ENCODE measurements at regions of chr16 and their contacts with region 1.

Region 1: GRCh38 chr16:71499775-71500364 is 10.7 kb upstream of the ZNF19 start:
- DNase-seq: no peak
- ATAC-seq: peak; percentile 82
- H3K4me3 ChIP-seq: no peak overlapping the region
- H3K27ac ChIP-seq: no peak overlapping the region
- H3K4me1 ChIP-seq: no peaks in the 10 kb centered on the region
- H3K27me3 ChIP-seq: no peaks in the 10 kb centered on the region
- CTCF ChIP-seq: peak; percentile 67

Region 2: DNA sequence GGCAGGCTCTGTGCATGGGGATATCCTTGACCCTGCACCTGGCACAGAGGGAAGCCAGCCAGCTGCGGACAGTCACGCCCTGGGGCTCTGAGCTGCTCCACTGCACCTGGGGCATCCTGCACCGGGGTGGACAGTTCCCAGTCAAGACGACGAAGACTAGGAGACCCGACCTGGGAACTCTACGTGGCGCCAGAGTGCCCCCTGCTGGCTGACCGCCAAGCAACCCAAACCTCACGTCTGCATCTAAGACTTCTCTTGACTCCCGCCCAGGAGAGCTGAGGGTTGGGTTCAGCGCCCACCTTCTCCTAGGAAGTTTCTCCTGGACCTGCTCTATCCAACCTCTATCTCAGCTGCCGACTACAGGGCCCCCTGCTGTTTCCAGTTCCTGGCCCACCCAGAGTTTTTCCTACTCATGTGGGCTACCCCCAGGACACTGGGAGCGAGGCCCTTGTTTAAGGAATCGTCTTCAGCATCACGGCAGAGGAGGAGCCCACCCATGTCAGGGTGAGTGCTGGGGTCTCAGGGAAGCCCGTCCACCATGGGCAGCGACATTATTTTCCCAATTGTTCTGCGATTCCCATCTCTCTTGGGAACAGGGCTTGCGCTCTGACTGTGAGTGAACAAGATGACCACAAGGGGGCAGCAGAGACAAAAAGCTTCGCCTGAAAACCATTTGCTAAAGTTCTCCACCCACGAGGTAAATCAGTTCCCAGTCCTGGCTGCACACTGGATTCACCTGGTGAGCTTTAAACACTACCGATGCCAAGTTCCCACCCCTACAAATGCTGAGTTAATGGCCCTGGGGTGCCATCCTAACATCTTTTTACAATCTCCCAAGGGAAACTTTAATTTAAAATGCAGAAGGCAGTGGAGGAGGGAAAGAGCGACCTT is 87.4 kb before region 1 on chr16:
- intact Hi-C with region 1: loop called (anchors 5 kb)
- DNase-seq: peak; percentile 73
- ATAC-seq: peak; percentile 87
- H3K4me3 ChIP-seq: no peak overlapping the region
- H3K27ac ChIP-seq: no peak overlapping the region
- H3K4me1 ChIP-seq: no peaks in the 10 kb centered on the region
- H3K27me3 ChIP-seq: peaks cover 30% of the 10 kb centered on the region
- CTCF ChIP-seq: peak; percentile 82

Measured in upper lobe of right lung (tissue), 1 donor.